AG04450 (cell line): ENCODE measurements at regions of chr17 and their contacts with region 1.

Region 1: GRCh38 chr17:34361478-34362061 is 1.5 kb downstream of the CCL1 start:
- DNase-seq: peak; percentile 72
- H3K4me3 ChIP-seq: no peak overlapping the region
- H3K27ac ChIP-seq: no peak overlapping the region
- H3K27me3 ChIP-seq: peaks cover 9% of the 10 kb centered on the region
- CTCF ChIP-seq: peak; percentile 100

Region 2: GRCh38 chr17:34163646-34164045 is 197.9 kb before region 1 on chr17:
- CTCF ChIA-PET with region 1: interaction called, 124 read pairs
- POLR2A ChIA-PET with region 1: no interaction called
- DNase-seq: no peak
- H3K4me3 ChIP-seq: no peak overlapping the region
- H3K27ac ChIP-seq: no peak overlapping the region
- H3K27me3 ChIP-seq: peaks cover 28% of the 10 kb centered on the region
- CTCF ChIP-seq: peak; percentile 63

Region 3: GRCh38 chr17:34220754-34221395 is 140.7 kb before region 1 on chr17:
- CTCF ChIA-PET with region 1: interaction called, 54 read pairs
- POLR2A ChIA-PET with region 1: no interaction called
- DNase-seq: no peak
- H3K4me3 ChIP-seq: no peak overlapping the region
- H3K27ac ChIP-seq: no peak overlapping the region
- H3K27me3 ChIP-seq: peaks cover 4% of the 10 kb centered on the region
- CTCF ChIP-seq: no peak

Region 4: GRCh38 chr17:34248511-34249024 is 113.0 kb before region 1 on chr17:
- CTCF ChIA-PET with region 1: interaction called, 47 read pairs
- POLR2A ChIA-PET with region 1: no interaction called
- DNase-seq: peak; percentile 62
- H3K4me3 ChIP-seq: no peak overlapping the region
- H3K27ac ChIP-seq: peak overlapping the region; percentile 85
- H3K27me3 ChIP-seq: no peaks in the 10 kb centered on the region
- CTCF ChIP-seq: no peak

Region 5: DNA sequence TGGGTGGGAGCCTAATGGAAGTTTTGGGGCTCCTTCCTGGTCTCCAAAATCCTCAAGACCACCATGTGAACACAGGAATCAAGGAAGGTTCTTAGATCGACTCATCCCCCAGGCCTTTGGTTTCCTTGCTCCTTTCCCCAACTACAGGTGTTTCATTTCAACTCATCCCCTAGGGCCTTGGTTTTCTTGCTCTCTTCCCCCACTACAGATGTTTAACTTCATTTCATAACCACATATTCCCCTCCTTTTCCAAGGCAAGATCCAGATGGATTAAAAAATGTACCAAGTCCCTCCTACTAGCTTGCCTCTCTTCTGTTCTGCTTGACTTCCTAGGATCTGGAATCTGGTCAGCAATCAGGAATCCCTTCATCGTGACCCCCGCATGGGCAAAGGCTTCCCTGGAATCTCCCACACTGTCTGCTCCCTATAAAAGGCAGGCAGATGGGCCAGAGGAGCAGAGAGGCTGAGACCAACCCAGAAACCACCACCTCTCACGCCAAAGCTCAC is 76.2 kb before region 1 on chr17 and contains the start of gene CCL11:
- CTCF ChIA-PET with region 1: interaction called, 28 read pairs
- POLR2A ChIA-PET with region 1: no interaction called
- DNase-seq: no peak
- H3K4me3 ChIP-seq: no peak within 1 kb of the TSS
- H3K27ac ChIP-seq: no peak within 1 kb of the TSS
- H3K27me3 ChIP-seq: peaks cover 12% of the 10 kb centered on the region
- CTCF ChIP-seq: no peak
- polyA plus RNA-seq, gene CCL11: 0.73 and 0.89 TPM in 2 replicates

Region 6: GRCh38 chr17:34347063-34347462 is 14.5 kb before region 1 on chr17:
- CTCF ChIA-PET with region 1: interaction called, 44 read pairs
- POLR2A ChIA-PET with region 1: interaction called, 3 read pairs
- DNase-seq: no peak
- H3K4me3 ChIP-seq: no peak overlapping the region
- H3K27ac ChIP-seq: no peak overlapping the region
- H3K27me3 ChIP-seq: no peaks in the 10 kb centered on the region
- CTCF ChIP-seq: no peak